Activated CD4-positive, alpha-beta T cell treated with anti-CD3 and anti-CD28 coated beads for 36 hours (primary cell): ENCODE measurements at regions of chr2 and their contacts with region 1.

Region 1: GRCh38 chr2:25558262-25558661 is 115.1 kb downstream of the DTNB start:
- DNase-seq: peak; percentile 67
- ATAC-seq: peak; percentile 88
- H3K4me3 Mint-ChIP-seq: no peak overlapping the region
- H3K27ac Mint-ChIP-seq: peak overlapping the region; percentile 74
- H3K4me1 Mint-ChIP-seq: peaks cover 60% of the 10 kb centered on the region
- H3K27me3 Mint-ChIP-seq: no peaks in the 10 kb centered on the region

Region 2: DNA sequence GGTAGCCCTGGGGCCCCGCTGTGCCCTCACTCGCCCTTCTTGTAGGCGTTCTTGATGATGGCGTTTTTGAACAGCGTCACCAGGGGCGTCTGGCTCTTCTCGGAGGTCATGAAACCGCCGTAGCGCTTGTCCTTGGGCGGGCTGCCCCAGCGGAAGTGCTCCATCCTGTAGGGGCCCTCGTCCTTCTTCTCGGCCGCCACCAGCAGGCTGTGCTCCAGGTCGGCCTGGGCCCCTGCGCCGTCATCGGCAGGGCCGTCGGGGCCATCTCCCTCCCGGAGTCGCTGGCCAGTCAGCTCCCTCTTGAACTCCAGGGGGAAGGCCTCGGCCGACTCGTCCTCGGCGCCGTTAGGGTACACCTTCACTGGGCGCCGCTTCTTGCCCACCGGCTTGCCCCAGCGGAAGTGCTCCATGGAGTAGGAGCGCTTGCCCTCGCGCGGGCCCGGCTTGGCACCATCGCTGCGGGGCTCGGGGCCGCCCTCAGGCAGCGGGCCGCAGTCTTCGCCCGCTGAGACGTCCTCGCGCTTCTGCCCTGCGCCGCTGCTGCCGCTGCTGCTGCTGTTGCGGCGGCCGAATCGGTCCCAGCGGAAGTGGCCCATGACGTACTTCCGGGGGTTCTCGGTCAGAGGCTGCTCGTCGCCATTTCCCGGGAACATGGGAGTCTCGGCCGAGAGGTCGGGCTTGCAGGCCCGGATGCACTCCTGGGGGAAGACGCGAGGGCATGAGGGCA is 397.0 kb before region 1 on chr2:
- CTCF ChIA-PET with region 1: no interaction called
- POLR2A ChIA-PET with region 1: no interaction called
- intact Hi-C with region 1: loop called in 1 of 2 experiments (anchors 2 kb)
- DNase-seq: peak; percentile 91
- ATAC-seq: peak; percentile 76
- H3K4me3 Mint-ChIP-seq: peak overlapping the region; percentile 76
- H3K27ac Mint-ChIP-seq: peak overlapping the region; percentile 84
- H3K4me1 Mint-ChIP-seq: peaks cover 23% of the 10 kb centered on the region
- H3K27me3 Mint-ChIP-seq: no peaks in the 10 kb centered on the region

Region 3: GRCh38 chr2:25243995-25244394 is 314.3 kb before region 1 on chr2:
- CTCF ChIA-PET with region 1: no interaction called
- POLR2A ChIA-PET with region 1: no interaction called
- intact Hi-C with region 1: no loop called
- DNase-seq: no peak
- ATAC-seq: no peak
- H3K4me3 Mint-ChIP-seq: no peak overlapping the region
- H3K27ac Mint-ChIP-seq: no peak overlapping the region
- H3K4me1 Mint-ChIP-seq: no peaks in the 10 kb centered on the region
- H3K27me3 Mint-ChIP-seq: no peaks in the 10 kb centered on the region

Region 4: GRCh38 chr2:25362049-25362433 is 196.2 kb before region 1 on chr2:
- CTCF ChIA-PET with region 1: interaction called, 5 read pairs
- POLR2A ChIA-PET with region 1: no interaction called
- intact Hi-C with region 1: loop called in 1 of 2 experiments (anchors 1 kb)
- DNase-seq: peak; percentile 97
- ATAC-seq: peak; percentile 97
- H3K4me3 Mint-ChIP-seq: peak overlapping the region; percentile 79
- H3K27ac Mint-ChIP-seq: peak overlapping the region; percentile 96
- H3K4me1 Mint-ChIP-seq: peaks cover 14% of the 10 kb centered on the region
- H3K27me3 Mint-ChIP-seq: no peaks in the 10 kb centered on the region

Region 5: GRCh38 chr2:25521665-25522387 is 36.4 kb before region 1 on chr2:
- CTCF ChIA-PET with region 1: interaction called, 4 read pairs
- POLR2A ChIA-PET with region 1: interaction called, 4 read pairs
- intact Hi-C with region 1: loop called in 1 of 2 experiments (anchors 1 kb)
- DNase-seq: peak; percentile 34
- ATAC-seq: peak; percentile 98
- H3K4me3 Mint-ChIP-seq: peak overlapping the region; percentile 24
- H3K27ac Mint-ChIP-seq: peak overlapping the region; percentile 77
- H3K4me1 Mint-ChIP-seq: peaks cover 7% of the 10 kb centered on the region
- H3K27me3 Mint-ChIP-seq: no peaks in the 10 kb centered on the region

Region 6: GRCh38 chr2:25576596-25576995 is 18.3 kb after region 1 on chr2:
- CTCF ChIA-PET with region 1: no interaction called
- POLR2A ChIA-PET with region 1: no interaction called
- intact Hi-C with region 1: no loop called
- DNase-seq: no peak
- ATAC-seq: no peak
- H3K4me3 Mint-ChIP-seq: no peak overlapping the region
- H3K27ac Mint-ChIP-seq: no peak overlapping the region
- H3K4me1 Mint-ChIP-seq: no peaks in the 10 kb centered on the region
- H3K27me3 Mint-ChIP-seq: no peaks in the 10 kb centered on the region

Region 7: DNA sequence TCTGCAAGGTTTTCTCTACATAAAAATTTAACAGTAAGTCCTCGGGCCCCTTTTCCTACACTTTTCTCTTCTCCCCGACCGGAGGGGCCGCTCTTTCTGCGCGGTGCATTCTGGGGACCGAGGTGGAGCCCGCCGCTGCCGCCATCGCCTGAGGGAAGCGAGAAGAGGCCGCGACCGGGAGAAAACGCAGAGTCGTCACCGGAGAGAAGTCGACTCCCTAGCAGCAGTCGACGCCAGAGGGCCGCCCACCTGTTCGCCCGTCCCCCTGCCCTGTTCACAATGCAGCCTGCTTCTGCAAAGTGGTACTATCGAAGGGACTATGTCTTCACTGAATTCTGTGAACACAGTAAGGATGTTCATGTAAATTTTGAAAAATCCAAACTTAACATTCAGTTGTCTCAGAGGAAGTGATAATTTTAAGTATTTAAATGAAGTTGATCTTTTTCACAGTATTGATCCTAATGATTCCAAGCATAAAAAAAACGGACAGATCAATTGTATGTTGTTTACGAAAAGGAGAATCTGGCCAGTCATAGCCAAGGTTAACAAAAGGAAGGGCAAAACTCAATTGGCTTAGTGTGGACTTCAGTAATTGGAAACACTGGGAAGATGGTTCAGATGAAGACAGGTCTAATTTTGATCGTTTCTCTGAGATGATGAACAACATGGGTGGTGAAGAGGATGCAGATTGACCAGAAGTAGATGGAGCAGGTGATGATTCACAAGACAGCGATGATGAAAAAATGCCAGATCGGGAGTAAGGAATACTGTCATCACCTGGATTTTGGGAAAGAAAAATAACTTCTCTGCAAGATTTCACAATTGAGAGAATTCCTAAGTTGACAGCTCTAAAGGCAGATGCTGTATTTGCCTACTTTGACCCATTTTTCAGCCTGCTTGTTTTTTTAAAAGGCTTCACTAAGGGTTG is 264.2 kb after region 1 on chr2:
- CTCF ChIA-PET with region 1: no interaction called
- POLR2A ChIA-PET with region 1: no interaction called
- intact Hi-C with region 1: loop called in 1 of 2 experiments (anchors 1 kb)
- DNase-seq: peak; percentile 82
- ATAC-seq: peak; percentile 34
- H3K4me3 Mint-ChIP-seq: peak overlapping the region; percentile 72
- H3K27ac Mint-ChIP-seq: peak overlapping the region; percentile 79
- H3K4me1 Mint-ChIP-seq: peaks cover 69% of the 10 kb centered on the region
- H3K27me3 Mint-ChIP-seq: no peaks in the 10 kb centered on the region